ENCODE measurements at regions of chr7 and their contacts with region 1.

Region 1: DNA sequence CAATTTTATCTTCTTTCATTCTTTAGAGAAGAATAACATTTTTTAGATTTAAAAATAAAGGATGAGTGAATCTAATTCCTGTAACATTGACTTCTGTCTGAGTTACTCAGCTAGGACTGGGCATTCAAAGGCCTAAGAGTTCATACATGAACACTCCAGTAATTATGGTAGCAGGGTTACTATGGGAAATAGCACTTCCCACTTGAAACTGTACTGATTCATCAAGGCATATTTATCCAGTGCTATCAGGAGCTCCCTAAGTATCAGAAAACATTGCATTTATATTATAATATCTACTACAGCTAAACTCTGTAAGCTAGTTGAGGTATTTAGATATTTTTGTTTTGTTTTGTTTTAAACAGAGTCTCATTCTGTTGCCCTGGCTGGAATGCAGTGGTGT is 41.8 kb downstream of the NDUFB2 start:
- DNase-seq: no peak
- ATAC-seq: no peak
- H3K4me3 ChIP-seq: no peak overlapping the region
- H3K4me3 Mint-ChIP-seq: no peak overlapping the region
- H3K27ac ChIP-seq: no peak overlapping the region
- H3K27ac Mint-ChIP-seq: no peak overlapping the region
- H3K4me1 ChIP-seq: no peaks in the 10 kb centered on the region
- H3K4me1 Mint-ChIP-seq: no peaks in the 10 kb centered on the region
- H3K27me3 ChIP-seq: no peaks in the 10 kb centered on the region
- H3K27me3 Mint-ChIP-seq: no peaks in the 10 kb centered on the region

Region 2: GRCh38 chr7:140752533-140752932 is 14.3 kb after region 1 on chr7:
- CTCF ChIA-PET with region 1: no interaction called
- POLR2A ChIA-PET with region 1: interaction called in 1 of 2 experiments, 12 read pairs
- DNase-seq: no peak
- ATAC-seq: no peak
- H3K4me3 ChIP-seq: no peak overlapping the region
- H3K4me3 Mint-ChIP-seq: no peak overlapping the region
- H3K27ac ChIP-seq: no peak overlapping the region
- H3K27ac Mint-ChIP-seq: peak overlapping the region in 1 of 2 donors; percentile 45
- H3K4me1 ChIP-seq: no peaks in the 10 kb centered on the region
- H3K4me1 Mint-ChIP-seq: no peaks in the 10 kb centered on the region
- H3K27me3 ChIP-seq: no peaks in the 10 kb centered on the region
- H3K27me3 Mint-ChIP-seq: no peaks in the 10 kb centered on the region